Gastrocnemius medialis (tissue), 4 donors: ENCODE measurements at regions of chr16 and their contacts with region 1.

Region 1: GRCh38 chr16:2251483-2252240 is at the start of gene ECI1:
- DNase-seq: peak; percentile 93 to 95
- ATAC-seq: peak; percentile 92 to 96
- H3K4me3 ChIP-seq: peak within 1 kb of the TSS; percentile 68 to 89 (median 70)
- H3K27ac ChIP-seq: peak within 1 kb of the TSS; percentile 86 to 97 (median 92)
- H3K4me1 ChIP-seq: peaks cover 20 to 22% of the 10 kb centered on the region in 2 donors
- H3K27me3 ChIP-seq: no peaks in the 10 kb centered on the region
- CTCF ChIP-seq: peak; percentile 64 to 92 (median 87)
- POLR2A ChIP-seq: peak; percentile 87 to 94
- total RNA-seq, gene ECI1: 74.0 to 137 (median 79.3) TPM

Region 2: DNA sequence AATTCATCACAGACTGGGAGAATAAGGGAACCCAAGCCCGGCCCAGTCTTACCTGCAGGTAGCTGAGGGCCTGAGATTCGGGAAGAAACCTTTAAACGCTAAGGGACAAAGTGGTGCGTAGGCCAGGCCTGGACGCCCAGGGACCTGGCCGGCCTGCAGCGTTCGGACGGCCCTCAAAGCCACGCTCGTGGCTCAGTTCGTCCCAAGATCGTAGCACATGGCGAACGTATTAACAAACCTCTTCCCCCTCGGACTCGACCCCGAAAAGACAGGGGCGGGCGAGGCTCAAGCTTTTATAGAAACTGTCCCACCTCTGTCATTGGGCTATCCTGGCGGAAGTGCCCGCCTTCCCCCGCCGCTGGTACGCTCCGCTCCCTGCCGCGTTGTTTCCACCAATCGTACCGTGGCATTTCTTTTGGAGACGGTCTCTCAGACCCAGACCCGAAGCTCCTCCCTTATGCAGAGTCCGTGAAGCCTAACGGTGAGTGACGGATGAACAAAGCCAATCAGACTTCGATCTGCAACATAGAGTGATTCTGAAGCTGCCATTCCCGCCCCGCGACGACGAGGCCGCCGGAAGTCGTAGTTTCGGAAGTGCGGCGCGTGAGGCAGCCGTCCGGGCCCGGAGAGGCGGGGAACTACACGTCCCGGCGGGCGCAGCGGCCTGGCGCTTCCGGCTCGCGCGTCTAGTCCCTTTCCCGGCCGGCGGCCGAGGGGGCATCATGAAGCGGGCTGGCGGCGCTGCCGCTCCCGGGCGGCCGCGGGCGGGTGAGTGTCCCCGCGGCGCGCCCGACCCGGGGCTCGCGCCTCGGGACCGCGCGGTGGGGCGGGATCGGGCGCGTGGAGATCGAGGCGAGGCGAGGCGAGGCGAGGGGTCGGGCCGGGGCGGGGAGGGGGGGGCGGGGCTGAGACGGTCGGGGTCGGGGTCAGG is 96.3 kb before region 1 on chr16 and contains the start of gene TRAF7:
- in situ Hi-C with region 1: no loop called
- intact Hi-C with region 1: loop called (anchors 1 kb)
- DNase-seq: peak; percentile 99 to 100
- ATAC-seq: peak; percentile 95 to 98
- H3K4me3 ChIP-seq: peak within 1 kb of the TSS; percentile 71 to 89 (median 82)
- H3K27ac ChIP-seq: peak within 1 kb of the TSS; percentile 84 to 90 (median 86)
- H3K4me1 ChIP-seq: peaks cover 53 to 66% of the 10 kb centered on the region in 2 donors
- H3K27me3 ChIP-seq: no peaks in the 10 kb centered on the region
- CTCF ChIP-seq: peak in 1 of 5 experiments; percentile 3
- POLR2A ChIP-seq: peak; percentile 99
- total RNA-seq, gene TRAF7: 39.5 to 71.4 (median 55.9) TPM

Region 3: DNA sequence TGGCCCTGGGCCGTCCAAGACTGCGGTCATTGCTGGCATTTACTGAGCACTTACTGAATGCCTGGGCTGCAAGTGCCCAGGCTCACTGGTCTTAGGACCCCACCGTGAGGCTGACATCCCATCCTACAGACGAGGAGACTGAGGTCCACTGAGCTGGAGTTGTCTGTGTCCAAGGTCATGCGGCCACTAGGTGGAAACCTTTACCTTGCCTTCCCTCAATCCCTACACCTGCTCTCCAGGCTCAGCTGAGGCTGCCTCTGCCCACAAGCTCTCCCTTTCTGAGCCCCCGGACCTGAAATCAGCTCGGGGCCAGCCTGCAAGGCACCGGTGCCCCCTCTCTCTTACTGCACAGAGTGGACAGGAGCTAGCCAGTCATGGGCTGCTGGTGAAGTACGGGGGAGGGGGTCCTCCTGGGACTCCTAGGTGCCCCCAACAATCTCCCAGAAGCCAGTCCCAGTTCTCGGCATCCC is 56.8 kb before region 1 on chr16:
- in situ Hi-C with region 1: no loop called
- intact Hi-C with region 1: loop called (anchors 1 kb)
- DNase-seq: peak; percentile 29 to 49
- ATAC-seq: peak; percentile 80 to 88
- H3K4me3 ChIP-seq: no peak overlapping the region
- H3K27ac ChIP-seq: no peak overlapping the region
- H3K4me1 ChIP-seq: peaks cover 7 to 10% of the 10 kb centered on the region in 2 donors
- H3K27me3 ChIP-seq: peaks cover 27 to 36% (median 33%) of the 10 kb centered on the region in 3 donors
- CTCF ChIP-seq: peak in 4 of 5 experiments; percentile 51 to 66 (median 58)
- POLR2A ChIP-seq: no peak

Region 4: DNA sequence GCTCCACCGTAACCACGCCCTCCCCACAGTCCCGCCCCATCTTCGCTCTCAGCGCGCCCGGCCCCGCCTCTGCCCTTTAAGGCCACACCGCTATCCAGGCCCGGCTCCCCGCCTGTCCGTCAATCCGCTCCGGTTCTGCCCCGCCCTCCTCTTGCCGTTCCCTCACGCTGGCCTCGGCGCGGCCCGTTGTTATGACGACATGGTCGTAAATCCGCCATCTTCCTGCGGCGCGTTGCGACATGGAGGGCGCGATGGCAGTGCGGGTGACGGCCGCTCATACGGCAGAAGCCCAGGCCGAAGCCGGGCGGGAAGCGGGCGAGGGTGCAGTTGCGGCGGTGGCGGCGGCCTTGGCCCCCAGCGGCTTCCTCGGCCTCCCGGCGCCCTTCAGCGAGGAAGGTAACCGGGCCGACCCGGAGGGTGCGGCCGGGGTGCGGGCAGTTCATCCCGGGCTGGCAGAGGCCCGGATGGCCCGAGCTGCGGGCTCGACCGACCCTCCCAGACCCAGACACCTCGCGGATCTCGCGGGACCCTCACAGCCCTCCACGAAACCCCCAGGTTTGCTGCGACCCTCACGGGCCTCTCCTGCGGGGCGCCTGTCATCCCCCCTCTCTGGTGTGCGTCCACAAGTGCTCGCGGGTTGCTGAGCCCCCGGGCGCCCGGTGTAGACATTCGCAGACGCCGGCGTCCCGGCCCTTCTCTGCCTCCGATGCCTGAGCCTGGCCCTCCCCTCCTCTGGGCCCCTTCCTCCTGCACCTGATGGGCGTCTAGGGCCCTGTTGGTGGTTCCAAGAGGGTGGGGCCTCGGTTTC is 28.1 kb before region 1 on chr16 and contains the start of gene E4F1:
- in situ Hi-C with region 1: no loop called
- intact Hi-C with region 1: loop called (anchors 1 kb)
- DNase-seq: peak; percentile 99 to 100
- ATAC-seq: peak; percentile 97
- H3K4me3 ChIP-seq: peak within 1 kb of the TSS; percentile 78 to 98 (median 93)
- H3K27ac ChIP-seq: peak within 1 kb of the TSS; percentile 85 to 96 (median 94)
- H3K4me1 ChIP-seq: peaks cover 11 to 16% of the 10 kb centered on the region in 2 donors
- H3K27me3 ChIP-seq: no peaks in the 10 kb centered on the region
- CTCF ChIP-seq: no peak
- POLR2A ChIP-seq: peak; percentile 97 to 98
- total RNA-seq, gene E4F1: 24.5 to 38.4 (median 27.0) TPM

Region 5: DNA sequence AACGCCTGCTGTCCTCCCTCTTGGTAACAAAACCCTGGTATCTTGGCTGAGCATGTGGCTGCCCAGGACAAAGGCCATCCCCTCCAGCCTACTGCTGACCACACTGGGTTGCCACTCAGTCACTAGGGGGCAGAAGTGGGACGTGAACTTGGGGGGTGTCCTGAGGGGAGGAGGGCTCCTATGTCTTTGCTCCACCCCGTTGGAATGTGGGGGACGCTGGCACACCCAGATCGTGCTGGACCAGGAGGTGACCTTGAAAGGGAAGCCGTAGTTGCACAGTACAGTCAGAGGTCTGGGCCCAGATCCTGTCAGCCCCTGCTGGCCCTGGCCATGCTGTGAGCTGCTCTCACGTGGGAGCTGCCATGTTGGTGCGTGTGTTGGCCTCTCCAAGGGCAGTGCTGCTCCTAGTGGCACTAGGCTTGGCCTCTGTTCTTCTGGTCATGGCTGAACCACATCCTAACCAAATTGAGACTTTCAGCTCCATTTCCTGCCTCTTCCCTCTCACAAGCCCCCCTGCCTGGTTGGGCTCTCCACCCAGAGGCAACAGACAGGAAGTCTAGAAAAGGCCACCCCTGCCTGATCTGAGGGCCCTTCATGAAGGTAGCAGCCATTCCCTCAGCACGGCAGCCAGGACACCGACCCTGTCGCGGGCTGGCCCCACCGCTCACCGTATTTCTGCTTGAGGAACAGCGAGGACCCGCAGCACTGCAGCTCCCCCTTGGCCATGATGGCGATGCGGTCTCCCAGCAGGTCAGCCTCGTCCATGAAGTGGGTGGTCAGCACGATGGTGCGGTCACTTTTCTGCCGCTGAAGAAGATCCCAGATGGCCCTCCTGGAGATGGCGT is 45.2 kb after region 1 on chr16:
- in situ Hi-C with region 1: no loop called
- intact Hi-C with region 1: no loop called
- DNase-seq: peak in 1 of 2 donors; percentile 32
- ATAC-seq: peak in 1 of 2 donors; percentile 44
- H3K4me3 ChIP-seq: no peak overlapping the region
- H3K27ac ChIP-seq: no peak overlapping the region
- H3K4me1 ChIP-seq: no peaks in the 10 kb centered on the region
- H3K27me3 ChIP-seq: no peaks in the 10 kb centered on the region
- CTCF ChIP-seq: peak in 4 of 5 experiments; percentile 20 to 42 (median 30)
- POLR2A ChIP-seq: no peak